ENCODE measurements at regions of chrX and their contacts with region 1.

Region 1: DNA sequence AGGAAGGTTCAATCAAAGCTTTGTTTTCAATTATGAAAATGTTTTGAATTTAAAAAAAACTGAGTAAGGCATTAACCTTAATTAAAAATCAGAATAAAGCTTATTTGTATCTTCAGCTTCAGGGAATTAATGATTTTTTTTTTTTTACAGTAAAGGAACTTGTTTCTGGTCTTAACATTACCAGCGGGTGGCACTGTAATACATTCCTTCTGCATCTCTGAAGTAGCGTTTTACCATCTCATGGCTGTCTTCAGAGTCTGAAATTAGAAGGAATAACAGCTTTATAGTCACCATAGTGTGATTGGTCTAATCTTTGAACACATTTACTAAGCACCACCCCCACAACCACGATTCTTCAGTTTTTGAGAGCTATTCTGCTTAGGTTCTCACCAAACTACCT is 102.6 kb downstream of the IL1RAPL2 start:
- DNase-seq: peak; percentile 57
- H3K4me3 ChIP-seq: no peak overlapping the region
- H3K27ac ChIP-seq: no peak overlapping the region
- H3K4me1 ChIP-seq: no peaks in the 10 kb centered on the region
- CTCF ChIP-seq: peak; percentile 73

Region 2: DNA sequence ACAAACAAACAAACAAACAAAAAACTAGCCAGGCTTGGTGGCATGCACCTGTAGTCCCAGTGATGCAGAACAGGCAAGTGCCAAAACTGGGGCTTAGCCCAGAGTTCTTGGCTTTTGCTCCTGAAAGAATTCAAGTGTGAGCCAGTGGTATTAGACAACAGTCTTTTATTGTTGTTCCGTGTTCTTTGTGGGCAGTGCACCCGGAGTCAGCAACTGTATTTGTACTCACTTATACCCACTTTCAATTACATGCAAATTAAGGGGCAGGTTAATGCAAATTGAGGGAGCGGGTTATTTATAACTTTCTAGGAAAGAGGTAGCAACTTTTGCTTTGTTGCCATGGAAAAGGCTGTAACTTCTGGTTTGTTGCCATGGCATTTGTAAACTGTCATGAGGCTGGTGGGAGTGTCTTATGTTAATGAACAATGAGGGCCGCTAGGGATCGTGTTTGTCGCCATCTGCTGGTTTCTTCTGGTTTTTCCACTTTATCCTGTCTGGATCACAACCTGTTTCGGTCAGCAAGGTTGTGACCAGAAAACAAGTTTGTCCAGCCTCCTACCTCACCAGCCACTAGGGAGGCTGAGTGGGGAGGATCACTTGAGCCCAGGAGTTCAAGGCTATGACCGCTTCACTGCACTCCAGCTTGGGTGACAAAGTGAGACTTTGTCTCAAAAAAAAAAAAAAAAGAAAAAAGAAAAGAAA is 325.0 kb before region 1 on chrX:
- CTCF ChIA-PET with region 1: no interaction called
- POLR2A ChIA-PET with region 1: no interaction called
- intact Hi-C with region 1: no loop called
- DNase-seq: peak; percentile 46
- H3K4me3 ChIP-seq: no peak overlapping the region
- H3K27ac ChIP-seq: no peak overlapping the region
- H3K4me1 ChIP-seq: no peaks in the 10 kb centered on the region
- CTCF ChIP-seq: peak; percentile 69

Region 3: DNA sequence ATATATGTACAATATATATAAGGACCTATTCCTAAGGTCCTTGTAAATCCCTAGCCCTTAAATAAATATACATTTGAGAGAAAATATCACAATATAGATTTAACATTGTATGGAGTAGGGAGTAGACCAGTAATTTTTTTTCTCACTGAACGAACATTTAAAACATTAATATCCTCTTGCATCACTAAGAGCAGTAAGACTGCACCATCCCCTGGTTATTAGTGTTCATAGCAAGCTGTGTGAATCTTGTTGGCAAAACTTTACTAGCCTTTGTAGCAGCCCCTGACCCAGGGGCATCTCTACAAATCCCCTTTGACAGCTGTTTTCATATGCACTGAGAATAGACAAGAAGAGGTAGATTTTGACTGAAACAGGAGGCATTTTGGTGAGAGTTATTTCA is 44.0 kb after region 1 on chrX:
- CTCF ChIA-PET with region 1: no interaction called
- POLR2A ChIA-PET with region 1: interaction called, 5 read pairs
- intact Hi-C with region 1: loop called (anchors 2 kb)
- DNase-seq: peak; percentile 36
- H3K4me3 ChIP-seq: no peak overlapping the region
- H3K27ac ChIP-seq: no peak overlapping the region
- H3K4me1 ChIP-seq: no peaks in the 10 kb centered on the region
- CTCF ChIP-seq: peak; percentile 64

Region 4: DNA sequence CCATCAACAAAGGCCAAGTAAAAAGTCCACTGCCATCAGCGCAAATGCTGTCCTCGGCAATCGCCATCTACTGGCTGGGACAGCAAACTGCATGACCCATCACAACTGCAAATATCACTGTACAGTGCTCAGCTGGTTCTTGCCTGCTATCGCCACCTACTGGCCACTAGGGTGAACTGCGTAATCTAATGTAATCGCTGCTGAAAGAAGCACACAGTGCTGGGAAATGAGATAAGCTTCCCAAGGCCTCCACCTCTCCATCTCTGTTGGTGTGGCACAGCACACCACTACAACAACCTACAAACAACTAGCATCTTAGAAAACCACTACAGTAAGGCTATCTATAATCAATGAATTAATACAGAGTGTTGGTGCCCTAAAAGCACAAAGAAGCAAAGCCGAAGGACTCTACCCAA is 253.7 kb after region 1 on chrX:
- CTCF ChIA-PET with region 1: no interaction called
- POLR2A ChIA-PET with region 1: no interaction called
- intact Hi-C with region 1: loop called (anchors 1 kb)
- DNase-seq: peak; percentile 74
- H3K4me3 ChIP-seq: no peak overlapping the region
- H3K27ac ChIP-seq: no peak overlapping the region
- H3K4me1 ChIP-seq: no peaks in the 10 kb centered on the region
- CTCF ChIP-seq: peak; percentile 90

Measured in OCI-LY7 (cell line).